ENCODE measurements at regions of chrX and their contacts with region 1.

Region 1: DNA sequence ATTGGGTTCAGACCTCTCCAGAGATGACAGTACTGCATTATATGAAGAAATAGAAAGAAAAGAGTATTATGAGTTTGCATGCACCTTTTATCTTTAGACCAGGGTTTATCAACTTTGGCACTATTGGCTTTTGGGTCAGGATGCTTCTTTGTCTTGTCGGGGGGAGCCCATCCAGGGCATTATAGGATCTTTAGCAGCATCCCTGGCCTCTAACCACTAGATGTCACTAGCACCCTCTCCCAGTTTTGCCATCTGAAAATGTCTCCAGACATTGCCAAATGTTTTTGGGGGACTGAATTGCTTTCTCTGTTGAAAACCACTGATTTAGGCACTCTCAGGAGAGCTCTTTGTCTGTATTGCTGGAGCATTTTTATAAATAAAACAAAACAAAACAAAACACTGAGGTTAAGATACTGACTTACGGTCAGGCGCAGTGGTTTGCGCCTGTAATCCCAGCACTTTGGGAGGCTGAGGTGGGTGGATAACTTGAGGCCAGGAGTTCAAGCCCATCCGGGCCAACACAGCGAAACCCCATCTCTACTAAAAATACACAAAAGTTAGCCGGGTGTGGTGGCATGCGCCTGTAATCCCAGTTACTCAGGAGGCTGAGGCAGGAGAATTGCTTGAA is 23.6 kb downstream of the CA5B start:
- DNase-seq: peak; percentile 55
- H3K4me3 Mint-ChIP-seq: no peak overlapping the region
- H3K27ac Mint-ChIP-seq: peak overlapping the region; percentile 46
- H3K4me1 Mint-ChIP-seq: peaks cover 35% of the 10 kb centered on the region
- H3K27me3 Mint-ChIP-seq: no peaks in the 10 kb centered on the region

Region 2: DNA sequence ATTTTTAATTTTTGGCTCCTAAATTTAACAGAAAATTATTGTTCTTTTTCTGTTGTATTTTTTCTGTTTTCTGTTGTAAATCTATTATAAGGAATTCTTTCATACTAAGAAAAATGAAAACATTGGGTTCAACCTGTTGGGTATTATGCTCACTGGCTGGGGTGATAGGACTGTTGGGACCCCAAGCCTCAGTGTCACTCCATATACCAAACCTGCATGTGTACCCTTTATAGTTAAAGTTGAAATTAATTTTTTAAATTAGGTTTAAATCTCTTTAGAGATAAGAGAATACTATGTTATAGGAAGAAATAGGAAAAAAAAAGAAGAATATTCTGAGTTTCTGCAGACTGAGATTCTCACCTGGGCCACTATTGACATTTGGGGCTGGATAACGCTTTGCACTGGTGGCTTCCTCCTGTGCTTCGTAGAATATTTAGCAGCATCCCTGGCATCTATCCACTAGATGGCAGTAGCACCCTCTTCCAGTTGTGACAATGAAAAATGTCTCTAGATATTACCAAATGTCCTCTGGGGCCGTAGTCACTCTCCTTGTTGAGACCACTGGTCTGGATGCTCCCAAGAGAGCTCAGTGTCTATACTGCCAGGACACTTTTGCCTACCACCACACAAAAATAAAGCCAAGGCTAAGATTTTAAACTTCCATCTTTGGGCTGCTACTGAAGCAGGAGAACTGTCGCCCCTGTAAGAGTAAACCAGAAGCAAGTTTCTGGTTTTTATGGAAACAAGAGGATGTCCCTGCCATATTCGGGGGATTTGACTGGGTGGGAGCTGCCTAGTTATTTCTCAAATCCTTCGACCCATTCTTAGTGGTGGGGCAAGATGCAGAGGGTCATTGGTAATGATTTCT is 74.6 kb before region 1 on chrX:
- CTCF ChIA-PET with region 1: no interaction called
- intact Hi-C with region 1: loop called (anchors 1 kb)
- DNase-seq: peak; percentile 64
- H3K4me3 Mint-ChIP-seq: no peak overlapping the region
- H3K27ac Mint-ChIP-seq: no peak overlapping the region
- H3K4me1 Mint-ChIP-seq: peaks cover 8% of the 10 kb centered on the region
- H3K27me3 Mint-ChIP-seq: no peaks in the 10 kb centered on the region

Region 3: GRCh38 chrX:15973299-15973698 is 211.6 kb after region 1 on chrX:
- CTCF ChIA-PET with region 1: no interaction called
- intact Hi-C with region 1: loop called (anchors 2 kb)
- DNase-seq: peak; percentile 39
- H3K4me3 Mint-ChIP-seq: no peak overlapping the region
- H3K27ac Mint-ChIP-seq: no peak overlapping the region
- H3K4me1 Mint-ChIP-seq: peaks cover 6% of the 10 kb centered on the region
- H3K27me3 Mint-ChIP-seq: no peaks in the 10 kb centered on the region

Region 4: GRCh38 chrX:16212436-16212835 is 450.8 kb after region 1 on chrX:
- CTCF ChIA-PET with region 1: no interaction called
- intact Hi-C with region 1: loop called (anchors 1 kb)
- DNase-seq: peak; percentile 5
- H3K4me3 Mint-ChIP-seq: no peak overlapping the region
- H3K27ac Mint-ChIP-seq: no peak overlapping the region
- H3K4me1 Mint-ChIP-seq: no peaks in the 10 kb centered on the region
- H3K27me3 Mint-ChIP-seq: no peaks in the 10 kb centered on the region

Region 5: DNA sequence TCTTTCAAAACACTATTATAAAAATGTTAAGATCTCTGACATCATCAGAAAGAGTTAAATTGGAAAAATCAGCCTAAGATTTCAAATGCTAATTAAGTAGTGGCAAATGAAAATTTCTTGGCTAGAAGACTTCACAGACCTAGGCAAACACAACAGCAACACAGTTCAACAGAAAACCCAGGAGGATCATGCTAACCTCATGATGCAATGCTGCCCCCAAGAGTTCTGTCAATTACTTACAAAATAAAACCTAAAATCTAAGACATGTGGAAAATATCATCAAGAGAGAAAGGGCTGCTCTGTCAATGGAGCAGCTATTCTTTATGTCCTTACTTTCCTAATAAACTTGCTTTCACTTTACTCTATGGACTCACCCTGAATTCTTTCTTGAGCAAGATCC is 909.3 kb after region 1 on chrX:
- CTCF ChIA-PET with region 1: no interaction called
- intact Hi-C with region 1: loop called (anchors 10 kb)
- DNase-seq: peak; percentile 45
- H3K4me3 Mint-ChIP-seq: no peak overlapping the region
- H3K27ac Mint-ChIP-seq: no peak overlapping the region
- H3K4me1 Mint-ChIP-seq: no peaks in the 10 kb centered on the region
- H3K27me3 Mint-ChIP-seq: no peaks in the 10 kb centered on the region